Pancreas (tissue), 10 donors: ENCODE measurements at regions of chr12 and their contacts with region 1.

Region 1: GRCh38 chr12:106211973-106212372 is 35.8 kb downstream of the CKAP4 start:
- DNase-seq: no peak
- ATAC-seq: no peak
- H3K4me3 ChIP-seq: no peak overlapping the region
- H3K27ac ChIP-seq: no peak overlapping the region
- H3K4me1 ChIP-seq: no peaks in the 10 kb centered on the region
- H3K27me3 ChIP-seq: no peaks in the 10 kb centered on the region
- CTCF ChIP-seq: no peak

Region 2: GRCh38 chr12:106150555-106150954 is 61.4 kb before region 1 on chr12:
- intact Hi-C with region 1: loop called in 1 of 3 experiments (anchors 10 kb)
- DNase-seq: no peak
- ATAC-seq: no peak
- H3K4me3 ChIP-seq: no peak overlapping the region
- H3K27ac ChIP-seq: no peak overlapping the region
- H3K4me1 ChIP-seq: peaks cover 4 to 12% (median 6%) of the 10 kb centered on the region in 3 donors
- H3K27me3 ChIP-seq: no peaks in the 10 kb centered on the region
- CTCF ChIP-seq: no peak

Region 3: GRCh38 chr12:106321139-106321850 is 109.3 kb after region 1 on chr12:
- intact Hi-C with region 1: no loop called
- DNase-seq: no peak
- ATAC-seq: peak in 2 of 4 donors; percentile 70 to 86
- H3K4me3 ChIP-seq: no peak overlapping the region
- H3K27ac ChIP-seq: no peak overlapping the region
- H3K4me1 ChIP-seq: no peaks in the 10 kb centered on the region
- H3K27me3 ChIP-seq: no peaks in the 10 kb centered on the region
- CTCF ChIP-seq: no peak